Activated B cell treated with CpG ODN at 0.5 μM for 24 hours (primary cell): ENCODE measurements at regions of chr3 and their contacts with region 1.

Region 1: GRCh38 chr3:151356794-151357462 is 27.6 kb upstream of the P2RY13 start:
- DNase-seq: no peak
- ATAC-seq: peak; percentile 57
- H3K4me3 Mint-ChIP-seq: no peak overlapping the region
- H3K27ac Mint-ChIP-seq: peak overlapping the region; percentile 13
- H3K4me1 Mint-ChIP-seq: peaks cover 30% of the 10 kb centered on the region
- H3K27me3 Mint-ChIP-seq: no peaks in the 10 kb centered on the region
- CTCF ChIP-seq: no peak

Region 2: DNA sequence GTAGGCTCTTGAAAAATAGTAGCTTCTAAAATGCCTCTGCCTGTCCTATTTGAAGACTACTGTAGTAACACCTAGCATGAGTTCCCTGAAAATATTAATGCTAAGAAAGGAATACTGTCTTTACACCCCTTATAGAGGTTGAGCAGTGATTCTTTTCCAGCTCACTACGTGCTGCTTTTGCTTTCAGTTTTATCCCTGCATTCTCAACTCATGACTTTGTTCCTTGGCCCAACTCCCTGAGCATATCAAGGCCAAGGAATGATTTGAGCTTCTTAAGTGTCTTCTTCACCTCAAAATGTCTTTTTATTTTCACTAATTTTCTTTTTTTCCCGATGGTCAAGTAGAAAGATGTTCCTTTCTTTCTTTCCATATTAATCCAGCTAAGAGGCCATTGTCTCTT is 11.1 kb before region 1 on chr3:
- CTCF ChIA-PET with region 1: no interaction called
- POLR2A ChIA-PET with region 1: interaction called, 3 read pairs
- intact Hi-C with region 1: loop called (anchors 2 kb)
- DNase-seq: no peak
- ATAC-seq: no peak
- H3K4me3 Mint-ChIP-seq: no peak overlapping the region
- H3K27ac Mint-ChIP-seq: no peak overlapping the region
- H3K4me1 Mint-ChIP-seq: peaks cover 15% of the 10 kb centered on the region
- H3K27me3 Mint-ChIP-seq: no peaks in the 10 kb centered on the region
- CTCF ChIP-seq: no peak

Region 3: DNA sequence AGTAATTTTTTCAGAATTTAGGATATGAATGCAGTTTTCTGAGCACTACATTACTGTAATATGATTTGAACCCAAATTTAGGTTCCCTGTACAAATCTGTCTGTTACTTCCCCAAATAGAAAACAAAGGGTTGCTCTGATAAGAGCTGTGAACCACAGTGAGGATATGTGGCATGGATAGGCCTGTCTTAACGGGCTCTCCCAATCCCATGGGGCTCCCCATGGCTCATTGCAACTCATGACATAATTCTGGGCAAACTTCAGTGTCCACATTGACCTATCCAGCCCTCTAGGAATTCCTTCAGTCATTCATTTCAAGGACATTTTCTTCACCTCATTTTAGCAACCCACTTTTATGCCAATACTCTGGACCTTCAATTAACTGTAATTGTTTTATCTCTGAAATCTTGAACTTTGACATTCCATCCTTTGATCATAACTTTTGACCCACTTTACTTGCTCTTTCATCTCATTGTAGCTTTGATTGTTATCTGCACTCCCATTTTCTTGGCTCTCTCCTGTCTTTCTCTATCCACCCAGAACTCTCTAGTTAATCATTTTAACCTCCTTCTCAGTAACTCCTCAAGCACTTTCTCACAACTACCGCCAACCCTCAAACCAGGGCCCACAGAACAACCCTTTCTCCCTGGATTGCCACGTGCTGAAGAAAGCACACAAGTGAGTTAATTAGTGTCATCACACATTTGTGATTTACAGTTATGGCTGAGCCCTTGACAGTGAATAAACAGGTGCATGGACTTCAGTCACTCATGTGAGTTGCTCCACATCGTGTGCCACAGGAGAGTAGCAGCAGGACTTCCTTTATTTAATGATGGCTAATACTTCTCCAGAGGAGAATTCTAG is 281.9 kb after region 1 on chr3:
- CTCF ChIA-PET with region 1: no interaction called
- POLR2A ChIA-PET with region 1: no interaction called
- intact Hi-C with region 1: no loop called
- DNase-seq: no peak
- ATAC-seq: no peak
- H3K4me3 Mint-ChIP-seq: no peak overlapping the region
- H3K27ac Mint-ChIP-seq: no peak overlapping the region
- H3K4me1 Mint-ChIP-seq: no peaks in the 10 kb centered on the region
- H3K27me3 Mint-ChIP-seq: no peaks in the 10 kb centered on the region
- CTCF ChIP-seq: no peak